ENCODE measurements at regions of chr7 and their contacts with region 1.

Region 1: DNA sequence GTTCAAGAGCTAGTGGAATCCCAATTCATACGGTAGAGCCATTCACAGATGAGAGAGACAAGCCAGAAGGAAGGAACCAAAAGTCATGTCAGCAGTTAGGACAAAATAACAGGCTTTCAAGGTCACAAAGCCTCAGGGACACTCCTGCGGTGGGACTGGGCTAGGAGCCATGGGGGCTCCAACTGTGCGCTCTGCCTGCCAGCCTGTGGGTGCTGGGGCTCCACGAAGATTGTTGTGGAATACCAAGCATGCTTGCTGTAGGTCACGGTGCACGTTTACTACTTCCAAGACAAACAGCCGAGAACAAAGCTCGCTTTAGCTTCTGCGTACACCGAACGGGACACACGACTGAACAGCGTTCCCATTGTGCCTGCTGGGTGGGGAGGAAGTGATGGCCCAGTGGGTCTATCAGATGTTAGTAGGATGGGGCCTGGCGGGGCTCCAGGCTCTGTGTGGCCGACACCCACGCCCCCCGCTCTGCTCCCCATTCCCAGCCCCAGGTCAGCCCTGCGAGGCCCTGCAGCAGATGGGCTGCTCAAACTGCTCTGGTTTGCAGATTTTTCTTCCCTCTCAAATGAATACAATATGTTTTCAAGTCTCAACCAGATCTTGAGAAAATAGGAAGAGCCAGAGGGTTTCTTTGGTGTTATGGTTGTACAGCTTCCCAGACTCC is 158.9 kb downstream of the EGFR start:
- DNase-seq: peak; percentile 94
- ATAC-seq: peak; percentile 74
- H3K4me3 ChIP-seq: peak overlapping the region; percentile 42 to 79 (median 49); a peak in 5 of 6 replicates
- H3K27ac ChIP-seq: peak overlapping the region; percentile 99
- H3K4me1 ChIP-seq: peaks cover 69% of the 10 kb centered on the region
- H3K27me3 ChIP-seq: no peaks in the 10 kb centered on the region; a peak in 1 of 5 replicates
- CTCF ChIP-seq: peak; percentile 30
- EP300 ChIP-seq: peak in 1 of 2 experiments; percentile 71; a peak in 2 of 4 replicates
- POLR2A ChIP-seq: peak in 1 of 2 experiments; percentile 64; a peak in 2 of 4 replicates
- RAD21 ChIP-seq: no peak

Region 2: DNA sequence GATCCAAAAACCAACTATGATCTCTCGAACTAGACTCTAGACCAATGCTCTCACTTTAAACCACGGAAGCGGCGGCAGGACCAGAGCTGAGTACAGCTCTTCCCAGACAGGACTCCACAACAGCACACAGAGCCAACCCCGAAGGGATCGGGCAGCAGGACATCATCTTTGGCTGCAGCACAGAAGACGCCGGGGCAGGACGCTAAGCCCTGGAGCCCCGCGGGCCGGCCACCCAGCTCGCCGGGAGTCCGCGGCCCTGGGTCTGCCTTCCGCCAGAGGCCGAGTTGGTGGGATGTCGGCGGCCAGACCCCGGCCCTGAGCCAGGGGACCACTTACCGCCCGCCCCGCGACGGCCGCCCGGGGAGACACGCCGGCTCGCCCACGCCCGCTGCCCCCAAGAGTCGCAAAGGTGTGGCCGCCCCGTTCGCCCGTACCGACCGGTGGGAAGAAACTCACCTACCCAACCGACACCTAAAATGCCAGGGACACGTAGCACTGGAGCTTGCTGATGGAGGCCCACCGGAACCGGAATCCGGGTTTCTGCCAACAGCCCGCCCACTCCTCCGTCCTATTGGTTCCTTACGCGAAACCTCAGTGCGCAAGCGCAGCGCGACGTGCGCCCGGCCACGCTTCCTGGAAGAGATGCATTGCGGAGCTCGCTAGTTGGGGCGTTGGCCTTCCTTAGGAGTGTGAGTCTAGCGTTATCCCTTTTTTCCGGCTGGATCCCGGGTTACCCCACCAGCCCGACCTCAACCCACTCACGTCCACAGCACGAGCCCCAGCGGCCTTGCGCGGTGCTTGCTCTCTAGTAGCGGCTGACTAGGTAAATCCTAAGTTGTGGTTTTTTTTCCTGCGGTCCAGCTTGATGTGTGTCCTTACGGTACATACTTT is 418.8 kb before region 1 on chr7 and contains the start of gene SEC61G:
- CTCF ChIA-PET with region 1: no interaction called
- POLR2A ChIA-PET with region 1: interaction called, 21 read pairs
- in situ Hi-C with region 1: no loop called
- intact Hi-C with region 1: no loop called
- DNase-seq: peak; percentile 93
- ATAC-seq: peak; percentile 97
- H3K4me3 ChIP-seq: peak within 1 kb of the TSS; percentile 93 to 98 (median 98)
- H3K27ac ChIP-seq: peak within 1 kb of the TSS; percentile 74
- H3K4me1 ChIP-seq: peaks cover 47% of the 10 kb centered on the region
- H3K27me3 ChIP-seq: no peaks in the 10 kb centered on the region; a peak in 2 of 5 replicates
- CTCF ChIP-seq: no peak
- EP300 ChIP-seq: peak in 1 of 2 experiments; percentile 10; a peak in 1 of 4 replicates
- POLR2A ChIP-seq: peak; percentile 90 to 91
- RAD21 ChIP-seq: peak; percentile 11; the same call in 1 of the 2 replicates
- total RNA-seq, gene SEC61G: 328 and 434 TPM in 2 replicates

Region 3: GRCh38 chr7:55071411-55072175 is 106.1 kb before region 1 on chr7:
- CTCF ChIA-PET with region 1: no interaction called
- POLR2A ChIA-PET with region 1: interaction called, 34 read pairs
- in situ Hi-C with region 1: no loop called
- intact Hi-C with region 1: no loop called
- DNase-seq: no peak
- ATAC-seq: no peak
- H3K4me3 ChIP-seq: no peak overlapping the region
- H3K27ac ChIP-seq: peak overlapping the region; percentile 82
- H3K4me1 ChIP-seq: peaks cover 98% of the 10 kb centered on the region
- H3K27me3 ChIP-seq: no peaks in the 10 kb centered on the region
- CTCF ChIP-seq: no peak
- EP300 ChIP-seq: no peak
- POLR2A ChIP-seq: no peak
- RAD21 ChIP-seq: no peak

Region 4: DNA sequence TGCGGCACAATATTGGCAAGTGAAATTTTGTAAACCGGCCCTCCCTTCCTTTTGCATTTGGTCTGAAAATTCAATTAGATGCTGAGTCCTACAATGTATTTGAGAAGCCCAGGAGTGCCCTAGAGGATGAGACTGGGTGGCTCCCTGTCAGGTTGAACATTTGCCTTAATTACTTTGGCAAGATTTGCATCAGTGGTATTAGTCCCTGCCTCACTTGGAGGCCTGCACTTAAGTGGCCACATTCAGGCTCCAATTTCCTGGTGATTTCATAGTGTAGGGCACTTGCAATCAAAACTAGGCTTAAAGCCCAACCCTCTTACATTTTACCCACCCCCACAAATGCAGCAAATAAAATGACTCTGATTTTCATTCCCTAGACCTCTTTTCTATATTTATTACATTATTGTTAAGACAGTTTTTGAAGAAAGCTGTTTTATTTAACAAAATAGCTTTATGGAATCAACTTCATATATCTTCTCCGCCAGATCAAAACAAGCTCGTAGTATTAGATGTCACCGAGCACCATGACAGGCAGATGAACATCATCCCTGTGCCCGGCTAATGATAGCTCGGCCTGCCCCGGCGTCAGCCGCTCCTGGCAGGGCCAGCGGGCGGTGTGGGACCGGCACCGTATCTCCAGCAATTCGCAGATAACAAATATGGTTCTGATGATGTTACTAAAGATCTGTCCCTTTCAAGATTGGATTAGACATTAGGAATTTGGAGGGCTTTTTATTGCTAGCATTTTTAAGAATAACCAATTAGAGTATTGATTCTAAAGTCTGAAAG is 85.3 kb before region 1 on chr7:
- CTCF ChIA-PET with region 1: no interaction called
- POLR2A ChIA-PET with region 1: interaction called, 10 read pairs
- in situ Hi-C with region 1: no loop called
- intact Hi-C with region 1: no loop called
- DNase-seq: no peak
- ATAC-seq: no peak
- H3K4me3 ChIP-seq: no peak overlapping the region
- H3K27ac ChIP-seq: peak overlapping the region; percentile 58
- H3K4me1 ChIP-seq: peaks cover 54% of the 10 kb centered on the region
- H3K27me3 ChIP-seq: 0 out of 5 replicates have a peak, but pooled peaks cover 0 to 2% of the 10 kb centered on the region in 2 experiments
- CTCF ChIP-seq: no peak
- EP300 ChIP-seq: no peak
- POLR2A ChIP-seq: no peak
- RAD21 ChIP-seq: no peak

Region 5: DNA sequence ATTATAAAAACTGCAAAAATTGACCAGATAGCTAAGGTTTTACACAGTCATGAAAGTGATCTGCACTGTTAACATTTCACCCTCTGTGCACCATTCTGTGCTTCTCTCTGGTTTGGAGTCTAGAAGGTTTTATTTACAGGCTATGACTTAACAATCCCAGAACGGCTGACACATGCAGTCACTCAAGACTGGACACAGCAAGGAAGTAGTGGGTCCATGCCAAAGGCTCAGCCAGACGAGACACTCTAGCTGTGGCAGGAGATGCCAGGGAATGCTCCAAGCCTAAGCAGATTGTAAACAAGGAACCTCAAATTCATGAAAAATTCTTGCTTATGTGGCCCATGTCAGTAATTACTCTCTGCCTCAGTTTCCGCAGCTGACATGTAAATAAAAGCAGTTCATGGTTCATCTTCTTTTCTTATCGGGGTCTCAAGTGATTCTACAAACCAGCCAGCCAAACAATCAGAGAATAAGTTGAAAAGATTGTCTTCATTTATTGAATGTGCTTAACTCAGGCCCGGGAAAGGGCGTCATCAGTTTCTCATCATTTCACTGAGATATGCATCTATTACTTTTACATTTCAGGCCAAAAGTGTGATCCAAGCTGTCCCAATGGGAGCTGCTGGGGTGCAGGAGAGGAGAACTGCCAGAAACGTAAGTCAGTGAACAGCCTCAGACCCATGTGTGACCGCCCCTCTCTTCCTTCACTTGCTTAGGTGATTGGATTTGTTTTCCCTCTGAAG is 26.8 kb before region 1 on chr7:
- CTCF ChIA-PET with region 1: no interaction called
- POLR2A ChIA-PET with region 1: no interaction called
- in situ Hi-C with region 1: no loop called
- intact Hi-C with region 1: no loop called
- DNase-seq: no peak
- ATAC-seq: no peak
- H3K4me3 ChIP-seq: no peak overlapping the region
- H3K27ac ChIP-seq: no peak overlapping the region
- H3K4me1 ChIP-seq: no peaks in the 10 kb centered on the region
- H3K27me3 ChIP-seq: no peaks in the 10 kb centered on the region
- CTCF ChIP-seq: no peak
- EP300 ChIP-seq: no peak
- POLR2A ChIP-seq: no peak
- RAD21 ChIP-seq: no peak

Region 6: DNA sequence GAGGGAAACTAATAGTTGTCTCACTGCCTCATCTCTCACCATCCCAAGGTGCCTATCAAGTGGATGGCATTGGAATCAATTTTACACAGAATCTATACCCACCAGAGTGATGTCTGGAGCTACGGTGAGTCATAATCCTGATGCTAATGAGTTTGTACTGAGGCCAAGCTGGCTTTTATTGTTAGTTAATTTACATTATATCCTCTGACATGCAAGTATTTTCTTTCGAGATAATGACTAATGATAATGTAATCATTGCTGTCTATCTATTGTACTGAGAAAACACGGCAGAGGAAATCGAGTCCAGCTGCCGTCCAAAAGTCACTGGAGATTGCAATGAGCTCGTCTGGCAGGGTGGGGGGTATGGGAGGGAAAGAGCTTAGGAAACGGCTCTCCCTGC is 15.0 kb after region 1 on chr7:
- CTCF ChIA-PET with region 1: no interaction called
- POLR2A ChIA-PET with region 1: interaction called, 275 read pairs
- in situ Hi-C with region 1: no loop called
- intact Hi-C with region 1: loop called (anchors 1 kb)
- DNase-seq: no peak
- ATAC-seq: no peak
- H3K4me3 ChIP-seq: no peak overlapping the region
- H3K27ac ChIP-seq: no peak overlapping the region
- H3K4me1 ChIP-seq: peaks cover 43% of the 10 kb centered on the region
- H3K27me3 ChIP-seq: no peaks in the 10 kb centered on the region
- CTCF ChIP-seq: no peak
- EP300 ChIP-seq: no peak
- POLR2A ChIP-seq: no peak
- RAD21 ChIP-seq: no peak

Region 7: DNA sequence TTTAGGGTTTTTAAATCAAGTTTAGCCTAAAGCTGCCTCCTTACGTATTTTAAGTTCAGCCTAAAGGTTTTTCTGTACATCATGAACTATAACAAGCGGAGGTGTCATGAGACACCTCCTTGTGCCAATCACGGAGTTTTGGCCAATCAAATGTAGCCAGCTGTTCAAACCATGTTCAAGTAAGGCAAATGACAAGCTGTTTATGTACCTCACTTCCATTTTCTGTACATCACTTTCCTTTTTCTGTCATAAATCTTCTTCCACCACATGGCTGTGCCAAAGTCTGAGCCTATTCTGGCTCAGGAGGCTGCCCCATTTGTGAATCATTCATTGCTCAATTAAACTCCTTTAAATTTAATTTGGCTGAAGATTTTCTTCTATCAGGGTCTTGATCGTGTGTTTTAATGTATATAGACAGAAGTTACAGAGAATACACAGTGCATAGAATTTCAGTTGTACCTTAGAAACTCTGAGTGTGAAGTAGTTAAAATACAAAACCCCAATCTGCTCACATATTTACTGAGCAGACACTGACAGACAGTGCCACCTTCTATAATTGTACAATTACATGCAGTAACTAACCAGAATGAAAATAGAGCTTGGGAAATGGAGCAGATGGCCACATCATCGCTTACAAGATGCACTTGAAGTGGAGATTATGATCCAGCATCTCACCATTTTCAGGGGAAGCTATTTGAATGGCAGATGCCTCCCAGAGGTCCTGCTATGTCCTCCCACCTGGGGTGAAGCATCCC is 110.5 kb after region 1 on chr7:
- CTCF ChIA-PET with region 1: no interaction called
- POLR2A ChIA-PET with region 1: no interaction called
- in situ Hi-C with region 1: no loop called
- intact Hi-C with region 1: no loop called
- DNase-seq: no peak
- ATAC-seq: no peak
- H3K4me3 ChIP-seq: no peak overlapping the region
- H3K27ac ChIP-seq: no peak overlapping the region
- H3K4me1 ChIP-seq: no peaks in the 10 kb centered on the region
- H3K27me3 ChIP-seq: no peaks in the 10 kb centered on the region; a peak in 1 of 5 replicates
- CTCF ChIP-seq: no peak
- EP300 ChIP-seq: no peak
- POLR2A ChIP-seq: no peak
- RAD21 ChIP-seq: no peak

Measured in HepG2 (cell line).